Activated B cell treated with CpG ODN at 0.5 μM for 24 hours (primary cell): ENCODE measurements at regions of chr6 and their contacts with region 1.

Region 1: GRCh38 chr6:151765444-151765886 is 42.0 kb upstream of the ESR1 start:
- DNase-seq: no peak
- ATAC-seq: peak; percentile 52
- H3K4me3 Mint-ChIP-seq: no peak overlapping the region
- H3K27ac Mint-ChIP-seq: no peak overlapping the region
- H3K4me1 Mint-ChIP-seq: peaks cover 26% of the 10 kb centered on the region
- H3K27me3 Mint-ChIP-seq: no peaks in the 10 kb centered on the region
- CTCF ChIP-seq: peak; percentile 26

Region 2: GRCh38 chr6:151422981-151423380 is 342.5 kb before region 1 on chr6:
- CTCF ChIA-PET with region 1: no interaction called
- POLR2A ChIA-PET with region 1: no interaction called
- intact Hi-C with region 1: no loop called
- DNase-seq: no peak
- ATAC-seq: no peak
- H3K4me3 Mint-ChIP-seq: no peak overlapping the region
- H3K27ac Mint-ChIP-seq: no peak overlapping the region
- H3K4me1 Mint-ChIP-seq: no peaks in the 10 kb centered on the region
- H3K27me3 Mint-ChIP-seq: no peaks in the 10 kb centered on the region
- CTCF ChIP-seq: no peak

Region 3: GRCh38 chr6:151524059-151524458 is 241.4 kb before region 1 on chr6:
- CTCF ChIA-PET with region 1: no interaction called
- POLR2A ChIA-PET with region 1: no interaction called
- intact Hi-C with region 1: no loop called
- DNase-seq: no peak
- ATAC-seq: no peak
- H3K4me3 Mint-ChIP-seq: no peak overlapping the region
- H3K27ac Mint-ChIP-seq: no peak overlapping the region
- H3K4me1 Mint-ChIP-seq: no peaks in the 10 kb centered on the region
- H3K27me3 Mint-ChIP-seq: peaks cover 7% of the 10 kb centered on the region
- CTCF ChIP-seq: no peak

Region 4: GRCh38 chr6:151675746-151676416 is 89.6 kb before region 1 on chr6:
- CTCF ChIA-PET with region 1: interaction called, 3 read pairs
- POLR2A ChIA-PET with region 1: no interaction called
- intact Hi-C with region 1: loop called (anchors 2 kb)
- DNase-seq: peak; percentile 32
- ATAC-seq: peak; percentile 89
- H3K4me3 Mint-ChIP-seq: no peak overlapping the region
- H3K27ac Mint-ChIP-seq: no peak overlapping the region
- H3K4me1 Mint-ChIP-seq: peaks cover 4% of the 10 kb centered on the region
- H3K27me3 Mint-ChIP-seq: no peaks in the 10 kb centered on the region
- CTCF ChIP-seq: peak; percentile 74

Region 5: GRCh38 chr6:151723152-151723551 is 42.3 kb before region 1 on chr6:
- CTCF ChIA-PET with region 1: no interaction called
- POLR2A ChIA-PET with region 1: no interaction called
- intact Hi-C with region 1: loop called (anchors 2 kb)
- DNase-seq: no peak
- ATAC-seq: peak; percentile 90
- H3K4me3 Mint-ChIP-seq: peak overlapping the region; percentile 41
- H3K27ac Mint-ChIP-seq: peak overlapping the region; percentile 75
- H3K4me1 Mint-ChIP-seq: peaks cover 32% of the 10 kb centered on the region
- H3K27me3 Mint-ChIP-seq: no peaks in the 10 kb centered on the region
- CTCF ChIP-seq: no peak

Region 6: DNA sequence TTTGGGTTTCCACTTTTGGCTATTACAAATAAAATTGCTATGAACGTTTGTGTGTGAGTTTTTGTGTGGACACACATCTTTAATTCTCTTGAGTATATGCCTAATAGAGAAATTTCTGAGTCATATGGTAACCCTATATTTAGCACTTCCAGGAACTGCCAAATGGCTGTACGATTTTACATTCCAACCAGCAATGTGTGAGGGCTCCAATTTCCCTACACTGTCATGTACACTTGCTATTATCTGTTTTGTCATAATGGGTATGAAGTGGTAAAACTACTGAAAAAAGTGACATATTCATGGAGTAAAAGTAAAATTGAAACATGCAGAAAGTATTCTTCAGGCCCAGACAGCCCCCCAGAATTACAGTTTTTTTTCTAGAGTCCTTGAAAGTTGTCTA is 17.6 kb before region 1 on chr6:
- CTCF ChIA-PET with region 1: no interaction called
- POLR2A ChIA-PET with region 1: no interaction called
- intact Hi-C with region 1: no loop called
- DNase-seq: no peak
- ATAC-seq: no peak
- H3K4me3 Mint-ChIP-seq: no peak overlapping the region
- H3K27ac Mint-ChIP-seq: no peak overlapping the region
- H3K4me1 Mint-ChIP-seq: no peaks in the 10 kb centered on the region
- H3K27me3 Mint-ChIP-seq: no peaks in the 10 kb centered on the region
- CTCF ChIP-seq: no peak

Region 7: GRCh38 chr6:151822260-151823111 is 57.0 kb after region 1 on chr6:
- CTCF ChIA-PET with region 1: interaction called, 3 read pairs
- POLR2A ChIA-PET with region 1: no interaction called
- intact Hi-C with region 1: loop called (anchors 5 kb)
- DNase-seq: no peak
- ATAC-seq: peak; percentile 95
- H3K4me3 Mint-ChIP-seq: peak overlapping the region; percentile 59
- H3K27ac Mint-ChIP-seq: peak overlapping the region; percentile 8
- H3K4me1 Mint-ChIP-seq: peaks cover 20% of the 10 kb centered on the region
- H3K27me3 Mint-ChIP-seq: no peaks in the 10 kb centered on the region
- CTCF ChIP-seq: no peak

Region 8: DNA sequence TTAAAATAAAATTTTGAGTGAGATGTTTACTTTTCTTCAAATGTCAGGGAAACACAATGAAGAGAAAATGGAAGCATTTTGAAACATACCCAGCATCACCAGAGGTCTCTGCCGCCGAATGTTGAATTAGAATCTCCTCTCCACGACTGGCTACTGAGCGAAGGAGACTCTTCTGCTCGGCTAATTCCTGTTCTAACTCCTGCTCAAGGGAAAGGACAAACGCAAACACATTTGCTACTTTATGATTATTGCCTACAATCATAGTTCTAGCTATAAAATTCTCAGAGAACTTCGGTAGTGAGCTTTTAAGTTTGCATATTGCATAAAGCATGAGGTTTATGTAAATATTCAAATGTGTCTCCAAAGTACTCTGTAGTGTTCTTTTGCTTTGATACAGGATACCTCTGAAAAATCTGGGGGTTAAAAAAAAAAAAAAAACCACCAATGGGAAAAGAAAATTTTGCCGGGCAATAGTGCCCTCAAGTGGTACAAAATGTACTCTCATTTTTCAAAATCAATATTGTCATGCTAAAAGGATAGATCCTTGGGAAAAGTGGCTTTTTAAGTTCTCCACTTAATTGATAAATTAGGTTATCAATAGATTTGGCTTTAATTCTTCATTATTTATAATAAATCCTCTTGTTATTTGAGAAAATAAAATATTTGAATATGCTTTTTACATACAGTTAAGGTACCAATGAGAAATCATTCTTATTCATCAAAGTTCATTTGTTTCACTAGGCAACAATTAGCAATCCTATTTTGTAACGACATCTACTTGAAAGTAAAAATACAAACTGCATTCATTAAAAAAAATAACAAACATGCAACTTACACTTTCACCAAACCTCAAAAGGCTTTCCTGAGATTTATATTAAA is 502.7 kb after region 1 on chr6:
- CTCF ChIA-PET with region 1: interaction called, 6 read pairs
- POLR2A ChIA-PET with region 1: no interaction called
- intact Hi-C with region 1: loop called (anchors 1 kb)
- DNase-seq: no peak
- ATAC-seq: no peak
- H3K4me3 Mint-ChIP-seq: no peak overlapping the region
- H3K27ac Mint-ChIP-seq: no peak overlapping the region
- H3K4me1 Mint-ChIP-seq: no peaks in the 10 kb centered on the region
- H3K27me3 Mint-ChIP-seq: no peaks in the 10 kb centered on the region
- CTCF ChIP-seq: no peak